Dorsolateral prefrontal cortex (tissue), 120 donors: ENCODE measurements at regions of chr4 and their contacts with region 1.

Region 1: DNA sequence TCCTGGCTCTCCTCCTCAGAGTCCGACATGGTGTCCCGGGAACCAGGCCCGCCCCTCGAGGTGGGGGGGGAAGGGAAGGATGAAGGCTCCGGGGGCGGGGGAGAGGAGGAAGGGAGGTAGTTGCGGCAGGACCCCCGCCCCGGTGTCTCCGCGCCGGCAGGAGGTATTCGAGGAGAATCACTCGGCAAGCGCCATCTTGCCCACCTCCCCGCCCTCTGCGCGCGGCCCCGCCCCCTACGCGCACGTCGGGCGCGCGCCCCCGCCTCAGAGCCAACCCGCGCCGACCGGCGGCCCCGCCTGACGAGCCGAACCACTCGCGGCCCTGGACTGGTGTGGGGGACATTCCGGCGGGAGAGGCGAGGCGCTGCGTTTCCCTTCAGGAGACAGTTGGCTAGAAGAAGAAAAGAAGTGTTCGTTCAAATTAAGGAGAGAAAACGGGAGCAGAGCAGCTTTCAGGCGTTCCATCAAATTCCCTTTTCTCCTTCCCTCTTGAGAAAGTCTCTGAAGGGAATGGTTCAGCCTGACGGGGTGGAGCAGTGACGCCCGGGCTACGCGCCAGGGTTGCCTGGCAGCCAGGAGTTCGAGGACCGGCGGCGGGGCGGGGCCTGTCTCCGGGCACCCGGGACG is at the start of gene RAB28:
- DNase-seq: peak; percentile 95 to 98 (median 96)
- H3K4me3 ChIP-seq: peak within 1 kb of the TSS; percentile 67 to 99 (median 89)
- H3K27ac ChIP-seq: peak within 1 kb of the TSS; percentile 5 to 99 (median 95)
- H3K27me3 ChIP-seq: peaks cover 0 to 10% (median 0%) of the 10 kb centered on the region in 45 donors
- CTCF ChIP-seq: peak in 14 of 56 donors; percentile 1 to 37 (median 16)
- total RNA-seq, gene RAB28: 19.5 to 38.5 (median 25.8) TPM

Region 2: DNA sequence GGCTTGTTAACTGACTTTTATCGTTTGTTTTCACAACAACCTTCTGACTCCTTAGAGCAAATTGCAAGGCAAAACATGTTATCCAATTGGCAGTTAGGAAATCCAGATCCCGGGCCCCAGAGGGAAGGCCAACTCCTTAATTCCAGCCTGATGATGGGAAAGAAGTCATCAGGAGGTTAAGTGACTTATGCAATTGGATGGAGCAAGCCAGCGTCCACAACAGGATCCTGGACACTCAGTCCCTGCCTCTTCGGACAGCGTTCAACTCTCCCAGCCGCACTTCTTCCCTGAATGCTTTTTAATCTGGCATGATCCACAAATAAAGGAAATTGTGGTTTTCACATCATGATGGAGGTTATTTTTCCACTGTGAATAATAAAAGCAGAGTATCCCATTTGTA is 310.2 kb before region 1 on chr4:
- intact Hi-C with region 1: no loop called
- DNase-seq: no peak
- H3K4me3 ChIP-seq: no peak overlapping the region
- H3K27ac ChIP-seq: no peak overlapping the region
- H3K27me3 ChIP-seq: no peaks in the 10 kb centered on the region
- CTCF ChIP-seq: no peak

Region 3: GRCh38 chr4:13627606-13628301 is 143.5 kb after region 1 on chr4 and contains the start of gene BOD1L1:
- intact Hi-C with region 1: loop called in 1 of 2 experiments (anchors 2 kb)
- DNase-seq: peak; percentile 79 to 94 (median 90)
- H3K4me3 ChIP-seq: peak within 1 kb of the TSS; percentile 64 to 100 (median 94)
- H3K27ac ChIP-seq: peak within 1 kb of the TSS; percentile 52 to 99 (median 94)
- H3K27me3 ChIP-seq: no peaks in the 10 kb centered on the region
- CTCF ChIP-seq: peak; percentile 48 to 87 (median 72)
- total RNA-seq, gene BOD1L1: 36.2 to 63.5 (median 52.2) TPM